ENCODE measurements at regions of chr20 and their contacts with region 1.

Region 1: DNA sequence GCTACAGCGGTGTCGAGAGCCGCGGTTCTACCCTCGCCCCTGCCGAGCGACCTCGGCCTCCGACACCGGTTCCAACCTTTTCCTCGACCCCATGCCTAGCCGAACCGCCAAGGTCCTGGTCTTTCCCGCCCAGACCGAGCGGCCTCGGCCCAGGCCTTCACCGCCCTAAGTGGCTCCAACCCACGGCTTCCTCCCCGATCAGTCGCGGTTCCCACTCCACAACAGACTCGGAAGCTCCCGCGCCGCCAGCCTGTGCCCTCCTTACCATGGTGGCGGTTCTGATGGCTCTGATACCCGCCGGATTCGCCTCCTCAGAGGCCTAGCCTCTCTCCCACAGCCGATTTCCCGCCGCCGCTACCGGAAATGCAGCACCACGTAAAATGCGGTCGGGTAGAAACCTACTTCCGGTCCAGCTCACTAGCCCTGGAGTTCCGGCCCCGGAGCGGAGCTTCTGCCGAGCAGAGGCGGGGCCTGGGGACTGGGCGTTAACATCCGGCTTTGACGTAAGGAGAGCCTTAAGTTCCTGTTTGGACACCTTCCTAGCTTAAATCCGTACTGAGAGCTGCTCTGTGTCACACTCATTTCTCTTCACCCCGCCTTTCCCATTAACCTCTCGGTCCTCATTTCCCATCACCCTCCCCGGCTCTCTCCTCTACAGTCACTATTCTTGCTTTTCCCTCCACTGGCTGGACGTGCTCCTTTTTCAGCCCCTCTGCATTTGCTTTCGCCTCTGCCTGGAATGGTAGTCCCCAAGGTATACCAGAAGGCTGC is at the start of gene SNRPB:
- DNase-seq: peak; percentile 97
- H3K4me3 Mint-ChIP-seq: peak within 1 kb of the TSS; percentile 92
- H3K27ac Mint-ChIP-seq: peak within 1 kb of the TSS; percentile 100
- H3K4me1 Mint-ChIP-seq: peaks cover 47% of the 10 kb centered on the region
- H3K27me3 Mint-ChIP-seq: no peaks in the 10 kb centered on the region
- total RNA-seq, gene SNRPB: 506 and 513 TPM in 2 replicates

Region 2: GRCh38 chr20:2086177-2086979 is 384.2 kb before region 1 on chr20:
- intact Hi-C with region 1: no loop called
- DNase-seq: no peak
- H3K4me3 Mint-ChIP-seq: no peak overlapping the region
- H3K27ac Mint-ChIP-seq: no peak overlapping the region
- H3K4me1 Mint-ChIP-seq: no peaks in the 10 kb centered on the region
- H3K27me3 Mint-ChIP-seq: peaks cover 25% of the 10 kb centered on the region

Region 3: DNA sequence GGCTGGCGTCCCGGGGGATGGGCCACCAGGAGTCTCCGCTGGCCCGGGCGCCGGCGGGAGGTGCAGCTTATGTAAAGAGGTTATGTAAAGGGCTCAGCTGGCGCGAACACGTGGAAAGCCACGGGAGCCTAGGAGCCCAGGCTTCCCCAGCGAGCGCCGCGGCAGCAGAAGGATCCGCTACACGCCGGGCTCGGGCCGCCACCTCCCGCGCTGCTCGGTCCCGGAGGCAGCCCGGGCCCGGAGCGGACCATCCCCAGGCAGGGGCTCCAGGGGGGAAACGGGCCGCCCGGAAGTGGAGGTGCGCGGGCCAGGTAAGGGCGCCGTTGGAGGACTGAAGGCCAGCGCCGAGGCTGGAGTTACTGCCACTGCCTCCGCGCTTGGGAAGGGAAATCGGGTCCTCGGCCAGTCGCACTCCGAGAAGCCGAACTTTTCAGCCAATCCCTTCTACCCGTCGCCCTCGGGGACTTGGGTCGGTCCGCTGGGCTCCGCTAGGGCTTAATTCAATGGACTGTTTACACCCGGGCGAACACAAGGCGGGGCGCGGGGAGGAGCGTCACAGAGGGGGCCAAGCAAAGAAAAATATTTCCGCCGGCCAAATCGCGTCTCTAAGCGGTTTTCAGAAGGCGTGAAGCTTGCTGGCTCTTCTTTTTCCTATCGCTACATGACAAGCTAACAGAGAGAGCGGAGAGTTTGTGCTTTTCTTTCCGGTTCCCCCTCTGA is 368.6 kb before region 1 on chr20:
- intact Hi-C with region 1: loop called (anchors 2 kb)
- DNase-seq: peak; percentile 84
- H3K4me3 Mint-ChIP-seq: peak overlapping the region; percentile 93
- H3K27ac Mint-ChIP-seq: peak overlapping the region; percentile 100
- H3K4me1 Mint-ChIP-seq: peaks cover 36% of the 10 kb centered on the region
- H3K27me3 Mint-ChIP-seq: peaks cover 1% of the 10 kb centered on the region

Region 4: DNA sequence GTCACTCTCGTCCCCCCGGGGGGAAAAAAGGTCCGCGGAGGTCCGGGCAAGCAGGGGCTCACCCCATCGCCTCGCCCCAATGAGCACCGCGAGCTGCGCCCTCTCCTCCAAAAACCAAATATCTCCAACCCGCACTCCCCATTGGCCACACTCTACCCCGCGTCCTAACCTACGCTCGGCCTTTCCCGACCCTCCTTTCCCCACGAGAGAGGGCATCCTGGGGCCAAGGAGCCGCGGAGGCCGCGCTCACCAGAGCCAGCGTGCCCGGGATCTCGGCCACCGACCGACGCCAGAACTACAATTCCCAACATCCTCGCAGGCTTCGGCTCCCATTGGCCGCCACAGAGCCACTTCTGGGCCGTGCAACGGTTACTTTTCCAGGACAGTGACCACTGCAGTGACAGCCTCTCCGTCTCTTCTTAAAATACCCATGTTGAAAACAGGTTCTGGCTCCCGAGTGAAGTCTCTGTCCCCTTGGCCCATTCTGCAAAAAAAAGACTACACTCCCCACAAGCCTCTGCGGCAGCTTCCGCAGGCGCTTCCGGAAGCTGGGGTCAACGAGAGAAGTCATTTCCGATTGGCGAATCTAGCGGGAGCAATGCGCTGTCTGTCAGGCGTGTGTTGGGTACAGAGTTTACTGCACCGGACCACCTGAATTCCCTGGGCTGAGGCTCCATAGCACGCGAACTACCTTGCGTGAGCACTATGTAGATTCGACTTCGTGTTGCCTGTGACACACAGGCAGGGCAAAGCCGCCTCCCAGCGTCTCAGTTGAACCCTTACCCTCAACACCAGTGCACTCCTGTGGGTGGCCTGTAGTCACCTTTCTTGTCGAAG is 38.2 kb after region 1 on chr20 and contains the start of gene ZNF343:
- intact Hi-C with region 1: loop called (anchors 5 kb)
- DNase-seq: peak; percentile 72
- H3K4me3 Mint-ChIP-seq: peak within 1 kb of the TSS; percentile 99
- H3K27ac Mint-ChIP-seq: peak within 1 kb of the TSS; percentile 97
- H3K4me1 Mint-ChIP-seq: peaks cover 8% of the 10 kb centered on the region
- H3K27me3 Mint-ChIP-seq: peaks cover 11% of the 10 kb centered on the region
- total RNA-seq, gene ZNF343: 13.5 and 15.4 TPM in 2 replicates

Region 5: DNA sequence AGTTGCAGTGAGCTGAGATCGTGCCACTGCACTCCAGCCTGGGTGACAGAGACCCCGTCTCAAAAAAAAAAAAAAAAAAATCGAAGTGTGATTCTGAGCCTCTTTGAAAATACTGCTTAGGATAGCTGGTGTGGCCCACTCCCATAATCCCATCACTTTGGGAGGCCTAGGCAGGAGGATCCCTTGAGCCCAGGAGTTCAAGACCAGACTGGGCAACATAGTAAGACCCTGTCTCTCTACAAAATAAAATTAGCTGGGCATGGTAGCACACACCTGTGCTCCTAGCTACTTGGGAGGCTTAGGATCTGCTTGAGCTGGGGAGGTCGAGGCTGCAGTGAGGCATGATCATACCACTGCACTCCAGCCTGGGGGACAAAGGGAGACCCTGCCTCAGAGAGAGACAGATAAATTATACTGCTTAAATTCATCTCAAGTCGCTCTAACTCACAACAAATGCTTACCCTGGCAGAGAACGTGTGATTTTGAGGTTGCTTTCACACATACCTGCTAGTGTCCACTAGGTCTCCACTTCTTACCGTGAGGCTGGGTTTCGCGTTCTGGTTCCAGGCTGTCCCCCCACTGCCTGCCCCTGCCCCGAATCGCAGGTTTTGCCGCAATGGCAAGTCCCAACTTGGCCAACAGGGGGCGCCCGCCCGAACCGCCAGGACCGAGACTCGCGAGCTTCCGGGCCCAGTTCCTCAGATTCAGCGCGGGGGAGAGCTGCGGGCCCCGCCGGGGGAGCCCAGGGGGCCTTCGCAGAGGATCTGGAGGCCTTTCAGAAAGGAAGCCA is 53.5 kb after region 1 on chr20:
- intact Hi-C with region 1: loop called (anchors 5 kb)
- DNase-seq: peak; percentile 85
- H3K4me3 Mint-ChIP-seq: peak overlapping the region; percentile 86
- H3K27ac Mint-ChIP-seq: peak overlapping the region; percentile 80
- H3K4me1 Mint-ChIP-seq: peaks cover 14% of the 10 kb centered on the region
- H3K27me3 Mint-ChIP-seq: no peaks in the 10 kb centered on the region

Region 6: GRCh38 chr20:2610941-2611720 is 140.5 kb after region 1 on chr20:
- intact Hi-C with region 1: no loop called
- DNase-seq: no peak
- H3K4me3 Mint-ChIP-seq: no peak overlapping the region
- H3K27ac Mint-ChIP-seq: no peak overlapping the region
- H3K4me1 Mint-ChIP-seq: no peaks in the 10 kb centered on the region
- H3K27me3 Mint-ChIP-seq: peaks cover 12% of the 10 kb centered on the region

Region 7: GRCh38 chr20:2651772-2652723 is 181.4 kb after region 1 on chr20 and contains the start of gene NOP56:
- intact Hi-C with region 1: loop called (anchors 5 kb)
- DNase-seq: peak; percentile 92
- H3K4me3 Mint-ChIP-seq: peak within 1 kb of the TSS; percentile 89
- H3K27ac Mint-ChIP-seq: peak within 1 kb of the TSS; percentile 87
- H3K4me1 Mint-ChIP-seq: peaks cover 30% of the 10 kb centered on the region
- H3K27me3 Mint-ChIP-seq: no peaks in the 10 kb centered on the region
- total RNA-seq, gene NOP56: 693 and 705 TPM in 2 replicates